CD4-positive, alpha-beta T cell (primary cell): ENCODE measurements at regions of chr12 and their contacts with region 1.

Region 1: DNA sequence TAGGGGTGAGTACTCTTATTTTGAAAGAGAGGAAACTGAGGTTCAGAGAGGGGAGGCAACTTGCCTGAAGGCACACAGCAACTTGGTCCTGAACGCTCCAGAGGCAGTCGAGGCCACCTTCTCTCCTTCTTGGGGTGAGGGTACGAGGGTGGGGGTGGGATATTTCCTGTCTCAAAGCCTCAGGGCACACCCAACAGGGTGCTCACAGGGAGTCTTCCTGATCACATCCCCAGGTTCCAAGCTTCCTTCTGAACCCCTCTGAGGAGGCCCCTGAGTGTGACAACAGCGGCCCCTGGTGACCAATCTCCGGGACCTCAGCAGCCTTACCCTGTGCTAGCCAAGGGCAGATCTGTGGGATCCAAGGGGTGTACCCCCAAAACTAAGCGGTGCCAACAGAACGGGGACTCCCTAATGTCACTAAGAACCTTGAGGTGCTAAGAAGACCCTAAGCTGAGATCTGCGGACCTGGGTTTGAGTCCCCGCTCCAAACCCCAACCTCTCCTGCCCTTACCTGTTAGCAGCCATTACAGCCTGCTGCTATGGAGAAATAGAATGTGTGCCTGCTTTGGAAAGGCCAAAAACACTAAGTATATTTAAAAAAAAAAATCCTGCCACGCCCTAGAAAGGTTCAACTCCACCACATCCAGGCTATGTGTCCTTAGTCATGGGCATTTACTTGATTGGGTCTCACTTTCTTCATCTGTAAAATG is 57.9 kb downstream of the TRPV4 start:
- DNase-seq: peak; percentile 52 to 81 (median 67)
- ATAC-seq: peak; percentile 74
- H3K4me3 ChIP-seq: no peak overlapping the region
- H3K4me3 Mint-ChIP-seq: no peak overlapping the region
- H3K27ac ChIP-seq: no peak overlapping the region
- H3K27ac Mint-ChIP-seq: no peak overlapping the region
- H3K4me1 ChIP-seq: peaks cover 3% of the 10 kb centered on the region
- H3K4me1 Mint-ChIP-seq: peaks cover 6% of the 10 kb centered on the region
- H3K27me3 ChIP-seq: no peaks in the 10 kb centered on the region
- H3K27me3 Mint-ChIP-seq: no peaks in the 10 kb centered on the region
- CTCF ChIP-seq: peak; percentile 76

Region 2: DNA sequence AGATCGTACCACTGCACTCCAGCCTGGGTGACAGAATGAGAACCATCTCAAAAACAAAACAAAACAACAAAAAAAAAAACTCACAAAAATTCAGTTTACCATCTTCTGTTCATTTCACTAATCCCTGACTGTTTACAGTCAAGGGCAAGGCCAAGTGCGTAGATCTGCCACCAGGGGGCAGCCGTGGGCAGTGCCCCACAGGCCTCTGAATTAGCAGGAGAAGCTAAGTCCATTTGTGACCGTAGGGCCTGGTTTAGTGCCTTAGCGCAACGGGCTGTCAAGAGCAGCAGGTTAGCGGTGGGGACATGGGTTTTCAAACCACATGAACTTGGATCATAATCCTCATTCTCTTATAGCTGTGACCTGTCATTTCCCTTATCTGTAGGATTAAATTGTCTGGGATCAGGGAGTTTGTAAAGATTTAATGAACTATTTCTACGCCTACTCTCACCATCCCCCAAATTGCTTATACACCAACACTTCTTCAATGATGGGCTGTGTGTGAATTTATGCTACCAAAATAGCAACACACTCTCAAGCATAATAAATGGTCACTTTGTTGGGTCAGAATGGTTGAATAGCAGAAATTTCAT is 347.2 kb before region 1 on chr12:
- CTCF ChIA-PET with region 1: interaction called, 6 read pairs
- POLR2A ChIA-PET with region 1: interaction called, 3 read pairs
- intact Hi-C with region 1: loop called (anchors 1 kb)
- DNase-seq: peak; percentile 48 to 84 (median 68)
- ATAC-seq: peak; percentile 75
- H3K4me3 ChIP-seq: no peak overlapping the region
- H3K4me3 Mint-ChIP-seq: no peak overlapping the region
- H3K27ac ChIP-seq: no peak overlapping the region
- H3K27ac Mint-ChIP-seq: no peak overlapping the region
- H3K4me1 ChIP-seq: peaks cover 5% of the 10 kb centered on the region
- H3K4me1 Mint-ChIP-seq: peaks cover 6% of the 10 kb centered on the region
- H3K27me3 ChIP-seq: peaks cover 0 to 7% of the 10 kb centered on the region in 2 experiments
- H3K27me3 Mint-ChIP-seq: peaks cover 19% of the 10 kb centered on the region
- CTCF ChIP-seq: peak; percentile 93

Region 3: GRCh38 chr12:109518820-109519665 is 256.3 kb before region 1 on chr12:
- CTCF ChIA-PET with region 1: interaction called, 6 read pairs
- POLR2A ChIA-PET with region 1: no interaction called
- intact Hi-C with region 1: loop called (anchors 1 kb)
- DNase-seq: peak; percentile 27 to 72 (median 44)
- ATAC-seq: peak; percentile 63
- H3K4me3 ChIP-seq: no peak overlapping the region
- H3K4me3 Mint-ChIP-seq: no peak overlapping the region
- H3K27ac ChIP-seq: no peak overlapping the region
- H3K27ac Mint-ChIP-seq: no peak overlapping the region
- H3K4me1 ChIP-seq: no peaks in the 10 kb centered on the region
- H3K4me1 Mint-ChIP-seq: no peaks in the 10 kb centered on the region
- H3K27me3 ChIP-seq: no peaks in the 10 kb centered on the region
- H3K27me3 Mint-ChIP-seq: no peaks in the 10 kb centered on the region
- CTCF ChIP-seq: peak; percentile 72

Region 4: GRCh38 chr12:109597795-109598427 is 177.4 kb before region 1 on chr12:
- CTCF ChIA-PET with region 1: interaction called, 27 read pairs
- POLR2A ChIA-PET with region 1: interaction called, 3 read pairs
- intact Hi-C with region 1: loop called (anchors 1 kb)
- DNase-seq: peak; percentile 35 to 74 (median 52)
- ATAC-seq: peak; percentile 65
- H3K4me3 ChIP-seq: no peak overlapping the region
- H3K4me3 Mint-ChIP-seq: no peak overlapping the region
- H3K27ac ChIP-seq: no peak overlapping the region
- H3K27ac Mint-ChIP-seq: no peak overlapping the region
- H3K4me1 ChIP-seq: peaks cover 23% of the 10 kb centered on the region
- H3K4me1 Mint-ChIP-seq: peaks cover 26% of the 10 kb centered on the region
- H3K27me3 ChIP-seq: no peaks in the 10 kb centered on the region
- H3K27me3 Mint-ChIP-seq: no peaks in the 10 kb centered on the region
- CTCF ChIP-seq: peak; percentile 93

Region 5: DNA sequence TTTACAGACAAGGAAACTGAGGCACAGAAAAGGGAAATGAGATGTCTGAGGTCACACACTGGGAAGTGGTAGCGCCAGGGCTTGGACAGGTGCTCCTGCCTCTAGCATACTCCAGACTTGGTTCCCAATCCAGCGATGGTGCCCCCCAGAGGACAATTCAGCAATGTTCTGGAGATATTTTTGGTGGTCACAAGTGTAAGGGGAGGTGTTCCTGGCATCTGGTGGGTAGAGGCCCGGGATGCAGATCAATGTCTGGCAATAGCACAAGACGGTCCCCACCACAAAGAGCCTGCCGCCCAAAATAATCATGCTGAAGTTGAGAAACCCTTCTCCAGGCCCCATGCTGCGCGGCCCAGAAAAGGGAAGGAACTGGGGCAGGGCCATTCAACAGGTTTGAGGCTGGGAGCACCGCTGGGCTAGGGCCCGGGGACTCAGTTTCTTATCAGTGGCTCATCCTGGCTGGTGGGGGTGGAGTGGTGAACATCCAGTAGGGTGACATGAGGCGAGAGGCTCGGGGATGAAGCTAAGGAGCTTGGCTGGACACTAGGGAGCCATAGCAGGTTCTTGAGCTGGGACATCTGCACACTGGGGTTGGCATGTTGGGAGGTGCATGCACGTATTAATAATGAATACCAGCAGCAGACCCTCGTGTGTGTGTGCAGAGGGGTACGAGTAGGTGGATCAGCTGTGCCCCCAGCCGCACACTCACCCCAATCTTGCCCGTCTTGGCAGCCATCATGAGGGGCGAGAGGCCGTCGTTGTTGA is 22.8 kb after region 1 on chr12:
- CTCF ChIA-PET with region 1: no interaction called
- POLR2A ChIA-PET with region 1: no interaction called
- intact Hi-C with region 1: no loop called
- DNase-seq: no peak
- ATAC-seq: no peak
- H3K4me3 ChIP-seq: no peak overlapping the region
- H3K4me3 Mint-ChIP-seq: no peak overlapping the region
- H3K27ac ChIP-seq: no peak overlapping the region
- H3K27ac Mint-ChIP-seq: no peak overlapping the region
- H3K4me1 ChIP-seq: no peaks in the 10 kb centered on the region
- H3K4me1 Mint-ChIP-seq: no peaks in the 10 kb centered on the region
- H3K27me3 ChIP-seq: no peaks in the 10 kb centered on the region
- H3K27me3 Mint-ChIP-seq: peaks cover 9% of the 10 kb centered on the region
- CTCF ChIP-seq: no peak